ENCODE measurements at regions of chr11 and their contacts with region 1.

Region 1: DNA sequence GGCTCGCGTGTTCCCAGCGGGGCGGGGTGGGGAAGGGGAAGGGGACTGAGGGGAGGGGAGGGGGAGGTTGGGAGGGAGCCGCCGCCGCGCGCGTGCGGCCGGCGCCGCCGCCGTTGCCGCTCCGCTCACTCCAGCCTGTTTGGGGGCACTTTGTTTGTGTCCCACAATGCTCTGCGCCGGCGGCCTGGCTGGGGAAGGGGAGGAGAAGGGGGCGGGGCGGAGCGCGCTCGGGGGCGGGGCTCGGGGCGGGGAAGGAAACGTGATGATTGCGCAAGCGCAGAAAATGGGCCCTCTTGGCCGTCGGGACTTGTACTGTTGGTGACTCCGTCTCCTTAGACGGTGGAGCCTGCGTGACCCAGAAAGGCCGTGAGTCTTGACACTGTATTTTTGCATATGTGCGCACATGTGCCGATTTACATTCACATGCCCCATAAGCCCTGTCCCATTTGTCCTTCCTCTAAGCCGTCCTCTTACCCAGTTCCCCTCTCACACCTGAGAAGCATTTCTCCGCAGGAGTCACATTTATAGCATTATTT is at the start of gene ZBTB44:
- DNase-seq: peak; percentile 96
- ATAC-seq: peak; percentile 78
- H3K4me3 Mint-ChIP-seq: peak within 1 kb of the TSS; percentile 83
- H3K27ac Mint-ChIP-seq: peak within 1 kb of the TSS; percentile 95
- H3K4me1 Mint-ChIP-seq: peaks cover 36% of the 10 kb centered on the region
- H3K27me3 Mint-ChIP-seq: no peaks in the 10 kb centered on the region
- total RNA-seq, gene ZBTB44: 38.2 to 49.4 TPM

Region 2: GRCh38 chr11:129639300-129639699 is 675.5 kb before region 1 on chr11:
- CTCF ChIA-PET with region 1: no interaction called
- POLR2A ChIA-PET with region 1: no interaction called
- intact Hi-C with region 1: loop called in 1 of 2 experiments (anchors 10 kb)
- DNase-seq: peak; percentile 66
- ATAC-seq: peak; percentile 81
- H3K4me3 Mint-ChIP-seq: no peak overlapping the region
- H3K27ac Mint-ChIP-seq: peak overlapping the region; percentile 72
- H3K4me1 Mint-ChIP-seq: peaks cover 75% of the 10 kb centered on the region
- H3K27me3 Mint-ChIP-seq: peaks cover 3% of the 10 kb centered on the region

Region 3: DNA sequence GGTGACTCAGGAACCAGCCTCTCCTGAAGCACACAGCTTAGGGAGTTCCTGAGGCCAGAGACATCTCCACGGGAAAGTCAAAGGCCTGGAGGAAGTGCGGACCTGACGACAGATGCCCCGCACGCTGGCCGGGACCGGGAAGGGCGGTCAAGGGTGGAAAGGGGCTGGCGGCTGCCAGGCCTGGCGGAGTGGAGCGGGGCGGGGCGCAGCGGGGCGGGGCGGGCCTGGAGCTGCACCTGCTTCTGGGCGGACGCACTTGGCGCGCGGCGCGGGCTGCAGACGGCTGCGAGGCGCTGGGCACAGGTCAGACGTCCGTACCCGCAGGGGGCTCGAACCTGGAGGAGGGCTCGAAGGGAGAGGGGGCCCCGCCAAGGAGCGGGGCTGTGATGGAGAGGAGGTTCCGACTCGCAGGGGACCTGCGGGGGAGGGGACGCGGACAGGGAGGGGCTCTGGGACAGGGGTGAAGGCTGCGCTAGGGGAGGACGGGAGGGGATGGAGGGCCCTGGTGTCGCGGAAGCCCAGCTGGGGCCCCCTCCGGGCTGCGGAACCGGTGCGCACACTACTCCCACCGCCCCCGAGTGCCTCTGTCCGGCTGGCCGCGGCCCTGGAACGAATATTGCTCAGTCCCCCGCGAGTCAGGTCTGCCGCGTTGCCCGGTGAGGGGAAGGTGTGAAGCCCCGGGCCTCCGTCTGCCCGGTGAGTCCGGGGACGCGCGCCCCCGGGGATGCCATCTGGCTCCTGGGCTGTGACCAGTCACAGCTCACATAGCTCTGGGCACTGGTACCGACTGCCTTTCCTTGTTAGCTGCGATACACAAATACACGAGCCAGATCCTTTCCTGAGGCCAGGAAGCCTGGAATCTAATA is 499.0 kb before region 1 on chr11 and contains the start of gene TMEM45B:
- CTCF ChIA-PET with region 1: no interaction called
- POLR2A ChIA-PET with region 1: no interaction called
- intact Hi-C with region 1: loop called in 1 of 2 experiments (anchors 10 kb)
- DNase-seq: peak; percentile 62
- ATAC-seq: peak; percentile 63
- H3K4me3 Mint-ChIP-seq: peak within 1 kb of the TSS; percentile 72
- H3K27ac Mint-ChIP-seq: peak within 1 kb of the TSS; percentile 64
- H3K4me1 Mint-ChIP-seq: peaks cover 24% of the 10 kb centered on the region
- H3K27me3 Mint-ChIP-seq: peaks cover 12% of the 10 kb centered on the region
- total RNA-seq, gene TMEM45B: 2.1 to 3.1 TPM

Region 4: DNA sequence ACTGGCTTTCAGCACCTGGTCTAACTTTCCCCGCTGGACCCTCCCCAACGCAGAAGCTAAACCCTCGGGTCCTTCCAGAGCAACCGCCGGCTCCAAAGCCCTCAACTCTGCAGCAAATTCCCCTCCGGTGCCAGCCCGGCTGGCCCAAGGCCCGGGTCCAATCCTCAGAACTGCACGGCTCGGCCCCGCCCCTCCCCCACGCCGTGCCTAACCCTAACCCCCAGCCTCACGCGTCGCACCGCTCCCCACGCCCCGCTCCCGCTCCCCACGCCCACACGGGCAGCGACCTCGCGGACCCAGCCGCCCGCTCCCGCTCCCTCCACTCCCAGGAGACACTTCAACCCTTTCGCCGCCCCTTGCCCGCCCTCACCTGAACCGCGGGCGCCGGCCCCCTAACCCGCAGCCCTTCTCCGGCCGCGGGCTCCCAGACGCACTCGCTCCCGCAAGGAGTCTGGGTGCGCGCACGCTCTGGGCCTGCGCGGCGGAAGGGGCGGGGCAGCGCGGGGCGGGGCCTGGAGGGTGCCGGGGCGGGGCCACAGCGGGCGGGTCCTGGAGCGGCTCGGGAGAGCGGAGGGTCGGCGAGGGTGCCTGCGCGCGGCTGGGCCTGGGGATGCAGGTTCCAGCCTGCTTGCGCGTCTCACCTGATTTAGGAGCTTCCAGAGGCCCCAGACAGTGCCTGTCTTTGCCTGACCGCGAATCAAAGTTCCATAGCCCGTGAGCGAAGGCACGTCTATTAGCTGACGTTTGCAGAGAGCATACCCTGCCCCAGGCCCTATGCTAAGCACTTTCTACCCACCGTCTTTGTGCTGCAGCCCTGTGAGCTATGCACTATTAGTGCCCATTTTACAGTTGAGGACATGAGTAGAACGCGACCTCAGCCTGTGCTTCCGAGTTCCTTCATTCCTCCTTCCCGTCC is 419.4 kb before region 1 on chr11 and contains the start of gene NFRKB:
- CTCF ChIA-PET with region 1: no interaction called
- POLR2A ChIA-PET with region 1: no interaction called
- intact Hi-C with region 1: loop called in 1 of 2 experiments (anchors 1 kb)
- DNase-seq: peak; percentile 94
- ATAC-seq: peak; percentile 99
- H3K4me3 Mint-ChIP-seq: peak within 1 kb of the TSS; percentile 84
- H3K27ac Mint-ChIP-seq: peak within 1 kb of the TSS; percentile 71
- H3K4me1 Mint-ChIP-seq: peaks cover 41% of the 10 kb centered on the region
- H3K27me3 Mint-ChIP-seq: no peaks in the 10 kb centered on the region
- total RNA-seq, gene NFRKB: 27.3 to 31.0 TPM

Region 5: GRCh38 chr11:130330101-130330684 is 15.4 kb after region 1 on chr11:
- CTCF ChIA-PET with region 1: no interaction called
- POLR2A ChIA-PET with region 1: no interaction called
- intact Hi-C with region 1: no loop called
- DNase-seq: no peak
- ATAC-seq: no peak
- H3K4me3 Mint-ChIP-seq: no peak overlapping the region
- H3K27ac Mint-ChIP-seq: no peak overlapping the region
- H3K4me1 Mint-ChIP-seq: no peaks in the 10 kb centered on the region
- H3K27me3 Mint-ChIP-seq: no peaks in the 10 kb centered on the region

Region 6: DNA sequence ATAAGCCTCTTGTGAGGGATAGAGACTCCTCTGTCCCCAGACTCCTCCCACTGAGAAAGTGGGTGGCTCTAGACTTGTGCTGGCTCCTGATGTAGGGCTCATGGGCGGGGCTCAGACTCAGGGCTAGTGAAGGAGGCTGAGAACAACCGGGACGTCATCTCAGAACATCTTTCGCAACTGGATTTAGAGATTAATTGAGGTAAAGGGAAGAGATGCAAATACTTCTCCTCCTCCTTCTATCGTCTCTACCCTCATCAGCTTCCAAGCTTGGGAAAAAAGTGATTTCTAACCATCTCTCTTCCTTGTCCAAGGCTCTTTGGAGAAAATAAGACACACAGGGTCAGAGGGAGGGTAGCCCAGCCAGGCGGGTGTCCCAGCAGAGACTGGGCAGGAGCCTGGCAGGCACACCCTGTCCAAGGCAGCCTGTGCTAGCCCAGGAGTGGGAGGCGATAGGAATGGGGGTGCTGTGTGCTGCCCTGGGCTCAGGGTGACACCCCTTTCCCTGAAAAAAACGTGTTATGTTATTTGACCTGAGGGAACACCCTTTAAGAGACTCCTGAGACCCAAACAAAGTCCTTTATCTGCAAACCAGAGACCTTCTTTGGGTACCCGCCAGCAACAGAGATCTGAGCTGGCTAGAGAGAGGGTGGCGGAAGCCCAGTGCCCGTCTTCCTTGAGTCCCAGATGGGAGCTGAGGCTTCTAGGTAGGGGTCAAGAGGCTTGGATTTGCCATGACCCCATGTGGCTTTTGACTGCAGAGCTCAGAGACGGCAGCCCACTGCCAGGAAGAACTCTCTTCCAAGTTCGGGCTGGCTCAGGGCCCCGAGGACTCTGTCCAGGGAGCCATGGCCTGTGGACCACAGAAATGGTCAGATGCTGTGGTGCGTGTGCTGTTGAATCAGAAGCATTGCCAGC is 294.6 kb after region 1 on chr11:
- CTCF ChIA-PET with region 1: no interaction called
- POLR2A ChIA-PET with region 1: no interaction called
- intact Hi-C with region 1: no loop called
- DNase-seq: no peak
- ATAC-seq: no peak
- H3K4me3 Mint-ChIP-seq: no peak overlapping the region
- H3K27ac Mint-ChIP-seq: no peak overlapping the region
- H3K4me1 Mint-ChIP-seq: no peaks in the 10 kb centered on the region
- H3K27me3 Mint-ChIP-seq: peaks cover 2% of the 10 kb centered on the region

Measured in activated CD4-positive, alpha-beta T cell treated with anti-CD3 and anti-CD28 coated beads for 36 hours (primary cell).